Psoas muscle (tissue), 8 donors: ENCODE measurements at regions of chr18 and their contacts with region 1.

Region 1: GRCh38 chr18:50786864-50787263 is 33.0 kb downstream of the MRO start:
- DNase-seq: no peak
- ATAC-seq: no peak
- H3K4me3 ChIP-seq: no peak overlapping the region
- H3K27ac ChIP-seq: no peak overlapping the region
- H3K4me1 ChIP-seq: no peaks in the 10 kb centered on the region
- H3K27me3 ChIP-seq: no peaks in the 10 kb centered on the region
- CTCF ChIP-seq: no peak

Region 2: DNA sequence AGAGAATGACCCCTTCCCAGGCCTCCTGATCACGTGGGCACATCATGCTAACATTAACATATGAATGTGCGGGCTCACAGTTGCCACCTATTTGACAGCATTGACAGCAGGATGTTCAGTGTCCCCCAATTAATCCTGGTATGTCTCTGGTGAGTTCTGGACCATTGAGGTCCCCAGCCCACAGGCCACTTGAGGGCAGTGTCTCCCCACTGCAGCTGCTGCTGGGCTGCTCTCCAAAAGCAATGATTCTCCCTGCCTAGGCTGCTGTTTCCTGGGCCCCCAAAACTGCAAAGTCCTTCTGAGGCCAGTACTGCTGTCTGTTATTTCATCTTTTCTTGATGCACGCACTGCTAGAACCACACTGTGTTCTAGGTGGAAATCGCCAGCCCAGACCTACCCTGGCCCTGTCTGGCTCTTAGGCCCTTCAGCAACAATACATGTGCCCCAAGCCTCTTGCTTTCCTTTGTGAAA is 279.7 kb before region 1 on chr18:
- intact Hi-C with region 1: loop called (anchors 1 to 2 kb)
- DNase-seq: peak; percentile 26 to 63
- ATAC-seq: peak; percentile 62 to 90 (median 88)
- H3K4me3 ChIP-seq: no peak overlapping the region
- H3K27ac ChIP-seq: no peak overlapping the region
- H3K4me1 ChIP-seq: no peaks in the 10 kb centered on the region
- H3K27me3 ChIP-seq: no peaks in the 10 kb centered on the region
- CTCF ChIP-seq: peak; percentile 65

Region 3: DNA sequence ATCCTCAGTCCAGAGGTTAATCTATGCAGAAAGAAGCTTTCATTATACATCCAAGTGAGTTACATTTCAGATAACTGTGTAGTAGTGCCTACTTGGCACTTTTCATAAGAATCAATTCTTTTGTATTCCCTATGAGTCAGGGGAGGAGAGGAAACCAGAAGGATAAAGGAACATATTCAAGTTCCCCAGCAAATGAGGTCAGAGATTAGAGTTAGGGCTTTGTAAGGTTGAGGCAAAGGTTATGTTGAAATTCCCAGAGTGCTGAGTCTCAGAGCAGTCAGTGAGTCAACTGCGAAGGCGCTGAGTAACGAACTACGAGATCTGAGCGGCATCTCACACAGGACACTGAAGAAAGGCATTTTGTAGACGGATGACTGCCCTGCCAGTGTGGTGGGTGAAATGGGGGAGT is 67.0 kb after region 1 on chr18:
- intact Hi-C with region 1: no loop called
- DNase-seq: peak in 1 of 2 donors; percentile 26
- ATAC-seq: peak in 3 of 4 donors; percentile 44 to 60 (median 47)
- H3K4me3 ChIP-seq: no peak overlapping the region
- H3K27ac ChIP-seq: no peak overlapping the region
- H3K4me1 ChIP-seq: no peaks in the 10 kb centered on the region
- H3K27me3 ChIP-seq: no peaks in the 10 kb centered on the region
- CTCF ChIP-seq: no peak